Calu3 (cell line): ENCODE measurements at regions of chr20 and their contacts with region 1.

Region 1: GRCh38 chr20:324177-325044 is 941 bp upstream of the SOX12 start:
- DNase-seq: peak; percentile 93
- H3K4me3 Mint-ChIP-seq: peak overlapping the region; percentile 74
- H3K27ac Mint-ChIP-seq: peak overlapping the region; percentile 62
- H3K4me1 Mint-ChIP-seq: peaks cover 2% of the 10 kb centered on the region
- H3K27me3 Mint-ChIP-seq: no peaks in the 10 kb centered on the region
- CTCF ChIP-seq: no peak

Region 2: DNA sequence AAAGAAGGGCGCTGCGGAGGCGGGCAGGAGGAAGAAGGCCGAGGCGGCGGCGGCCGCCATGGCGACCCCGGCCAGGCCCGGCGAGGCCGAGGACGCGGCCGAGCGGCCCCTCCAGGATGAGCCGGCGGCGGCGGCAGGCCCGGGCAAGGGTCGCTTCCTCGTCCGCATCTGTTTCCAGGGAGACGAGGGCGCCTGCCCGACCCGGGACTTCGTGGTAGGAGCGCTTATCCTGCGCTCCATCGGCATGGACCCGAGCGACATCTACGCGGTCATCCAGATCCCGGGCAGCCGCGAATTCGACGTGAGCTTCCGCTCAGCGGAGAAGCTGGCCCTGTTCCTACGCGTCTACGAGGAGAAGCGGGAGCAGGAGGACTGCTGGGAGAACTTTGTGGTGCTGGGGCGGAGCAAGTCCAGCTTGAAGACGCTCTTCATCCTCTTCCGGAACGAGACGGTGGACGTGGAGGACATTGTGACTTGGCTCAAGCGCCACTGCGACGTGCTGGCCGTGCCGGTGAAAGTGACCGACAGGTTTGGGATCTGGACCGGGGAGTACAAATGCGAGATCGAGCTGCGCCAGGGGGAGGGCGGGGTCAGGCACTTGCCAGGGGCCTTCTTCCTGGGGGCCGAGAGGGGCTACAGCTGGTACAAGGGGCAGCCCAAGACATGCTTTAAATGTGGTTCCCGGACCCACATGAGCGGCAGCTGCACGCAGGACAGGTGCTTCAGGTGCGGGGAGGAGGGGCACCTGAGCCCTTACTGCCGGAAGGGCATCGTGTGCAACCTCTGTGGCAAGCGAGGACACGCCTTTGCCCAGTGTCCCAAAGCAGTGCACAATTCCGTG is 26.3 kb before region 1 on chr20:
- CTCF ChIA-PET with region 1: interaction called, 3 read pairs
- intact Hi-C with region 1: loop called (anchors 1 kb)
- DNase-seq: peak; percentile 45
- H3K4me3 Mint-ChIP-seq: peak overlapping the region; percentile 99
- H3K27ac Mint-ChIP-seq: peak overlapping the region; percentile 82
- H3K4me1 Mint-ChIP-seq: peaks cover 32% of the 10 kb centered on the region
- H3K27me3 Mint-ChIP-seq: no peaks in the 10 kb centered on the region
- CTCF ChIP-seq: no peak